Esophagus muscularis mucosa (tissue), 4 donors: ENCODE measurements at regions of chr3 and their contacts with region 1.

Region 1: DNA sequence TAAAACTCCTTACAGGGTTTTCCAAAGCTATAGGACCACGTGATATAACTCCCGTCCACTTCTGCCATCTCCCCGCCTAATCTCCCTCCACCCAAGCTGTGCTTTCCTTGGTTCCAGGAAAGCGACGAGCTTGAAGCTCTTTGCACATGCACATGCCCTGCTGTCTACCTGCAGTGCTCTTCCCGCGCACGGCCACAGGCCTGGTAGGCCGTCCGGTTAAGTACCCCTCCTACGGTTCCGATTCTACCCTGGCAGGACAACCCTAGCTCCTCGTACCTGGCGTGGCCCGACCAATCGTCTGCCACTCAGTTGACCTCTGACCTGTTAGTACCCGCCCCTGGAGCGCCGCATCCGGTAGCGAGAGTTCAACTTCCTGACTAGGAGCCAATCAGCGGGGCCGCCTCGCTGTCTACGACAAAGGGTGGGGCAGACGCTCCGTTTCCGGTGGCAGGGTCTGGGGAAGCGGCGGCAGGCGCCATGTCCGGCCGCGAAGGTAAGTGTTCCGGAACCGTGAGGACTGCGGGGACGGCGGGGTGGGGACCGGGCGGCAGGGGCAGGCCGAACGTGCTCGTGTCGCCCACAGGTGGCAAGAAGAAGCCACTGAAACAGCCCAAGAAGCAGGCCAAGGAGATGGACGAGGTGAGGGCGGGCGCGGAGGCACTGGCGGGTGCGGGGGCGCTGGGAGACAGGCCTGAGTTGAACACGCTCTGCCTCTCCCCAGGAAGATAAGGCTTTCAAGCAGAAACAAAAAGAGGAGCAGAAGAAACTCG is at the starts of genes CCDC51 and TMA7:
- DNase-seq: peak; percentile 100
- H3K4me3 ChIP-seq: peak within 1 kb of the TSS; percentile 76 to 87 (median 79)
- H3K27ac ChIP-seq: peak within 1 kb of the TSS; percentile 91 to 95 (median 92)
- H3K4me1 ChIP-seq: peaks cover 33 to 45% (median 43%) of the 10 kb centered on the region in 4 donors
- H3K27me3 ChIP-seq: no peaks in the 10 kb centered on the region
- CTCF ChIP-seq: no peak
- EP300 ChIP-seq: no peak
- POLR2A ChIP-seq: peak; percentile 91
- total RNA-seq, gene CCDC51: 15.6 to 26.6 (median 23.0) TPM
- total RNA-seq, gene TMA7: 167 to 270 (median 205) TPM

Region 2: GRCh38 chr3:48273594-48274211 is 166.3 kb before region 1 on chr3:
- intact Hi-C with region 1: loop called (anchors 2 kb)
- DNase-seq: no peak
- H3K4me3 ChIP-seq: no peak overlapping the region
- H3K27ac ChIP-seq: no peak overlapping the region
- H3K4me1 ChIP-seq: peaks cover 0 to 6% (median 3%) of the 10 kb centered on the region in 4 donors
- H3K27me3 ChIP-seq: no peaks in the 10 kb centered on the region
- CTCF ChIP-seq: peak; percentile 74 to 84 (median 74)
- EP300 ChIP-seq: no peak
- POLR2A ChIP-seq: no peak

Region 3: DNA sequence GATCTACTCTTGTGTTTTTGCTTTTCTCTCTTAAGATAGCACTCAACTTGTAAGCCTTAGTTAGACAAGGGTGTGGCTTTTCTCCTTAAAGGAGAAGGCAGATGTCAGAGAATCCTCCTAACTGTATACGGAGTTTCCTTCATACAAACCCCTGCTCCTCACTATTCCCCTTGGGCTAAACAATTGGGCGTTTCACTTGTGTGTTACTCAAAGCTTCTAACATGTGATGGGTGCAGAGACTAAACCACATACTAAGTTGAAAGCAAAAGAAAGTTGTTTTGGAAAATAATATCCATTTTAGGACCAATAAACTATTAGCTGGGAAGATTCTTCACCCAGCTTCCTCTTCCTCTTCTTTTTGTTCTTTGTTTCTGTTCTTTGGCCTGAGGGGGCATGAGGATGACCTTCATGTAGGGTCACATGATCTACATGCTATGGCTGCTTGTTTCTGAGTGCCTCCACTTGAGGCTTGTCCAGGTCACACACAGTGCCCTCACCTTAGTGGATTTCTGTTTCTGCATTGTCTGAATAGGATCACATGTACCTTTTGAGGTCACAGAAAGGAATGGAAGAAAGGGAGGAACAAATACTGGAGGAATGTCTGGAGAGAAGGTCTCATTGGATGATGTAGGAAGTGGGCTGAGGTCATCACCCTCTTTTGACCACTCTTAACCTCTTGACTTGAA is 121.1 kb before region 1 on chr3:
- intact Hi-C with region 1: no loop called
- DNase-seq: no peak
- H3K4me3 ChIP-seq: no peak overlapping the region
- H3K27ac ChIP-seq: no peak overlapping the region
- H3K4me1 ChIP-seq: no peaks in the 10 kb centered on the region
- H3K27me3 ChIP-seq: no peaks in the 10 kb centered on the region
- CTCF ChIP-seq: no peak
- EP300 ChIP-seq: no peak
- POLR2A ChIP-seq: no peak

Region 4: GRCh38 chr3:48400824-48401433 is 39.1 kb before region 1 on chr3:
- intact Hi-C with region 1: loop called (anchors 1 kb)
- DNase-seq: no peak
- H3K4me3 ChIP-seq: no peak overlapping the region
- H3K27ac ChIP-seq: peak overlapping the region; percentile 84 to 96 (median 95)
- H3K4me1 ChIP-seq: peaks cover 14 to 51% (median 33%) of the 10 kb centered on the region in 4 donors
- H3K27me3 ChIP-seq: no peaks in the 10 kb centered on the region
- CTCF ChIP-seq: peak; percentile 79 to 98 (median 84)
- EP300 ChIP-seq: no peak
- POLR2A ChIP-seq: no peak

Region 5: GRCh38 chr3:48507351-48508061 is 67.5 kb after region 1 on chr3:
- intact Hi-C with region 1: loop called (anchors 10 kb)
- DNase-seq: no peak
- H3K4me3 ChIP-seq: no peak overlapping the region
- H3K27ac ChIP-seq: no peak overlapping the region
- H3K4me1 ChIP-seq: peaks cover 25 to 32% (median 27%) of the 10 kb centered on the region in 4 donors
- H3K27me3 ChIP-seq: peaks cover 0 to 3% (median 0%) of the 10 kb centered on the region in 4 donors
- CTCF ChIP-seq: peak; percentile 32 to 51 (median 49)
- EP300 ChIP-seq: no peak
- POLR2A ChIP-seq: no peak